ENCODE measurements at regions of chr1 and their contacts with region 1.

Region 1: GRCh38 chr1:203486618-203487370 is 7.2 kb upstream of the OPTC start:
- DNase-seq: no peak
- ATAC-seq: no peak
- H3K4me3 ChIP-seq: no peak overlapping the region
- H3K27ac ChIP-seq: peak overlapping the region in 1 of 2 donors; percentile 23
- H3K4me1 ChIP-seq: no peaks in the 10 kb centered on the region
- H3K27me3 ChIP-seq: no peaks in the 10 kb centered on the region

Region 2: GRCh38 chr1:203340112-203340804 is 146.5 kb before region 1 on chr1:
- intact Hi-C with region 1: loop called (anchors 1 to 2 kb)
- DNase-seq: peak in 1 of 2 donors; percentile 70
- ATAC-seq: peak; percentile 82
- H3K4me3 ChIP-seq: no peak overlapping the region
- H3K27ac ChIP-seq: no peak overlapping the region
- H3K4me1 ChIP-seq: no peaks in the 10 kb centered on the region
- H3K27me3 ChIP-seq: no peaks in the 10 kb centered on the region

Region 3: GRCh38 chr1:203390298-203390697 is 96.5 kb before region 1 on chr1:
- intact Hi-C with region 1: no loop called
- DNase-seq: no peak
- ATAC-seq: no peak
- H3K4me3 ChIP-seq: no peak overlapping the region
- H3K27ac ChIP-seq: no peak overlapping the region
- H3K4me1 ChIP-seq: no peaks in the 10 kb centered on the region
- H3K27me3 ChIP-seq: no peaks in the 10 kb centered on the region

Region 4: GRCh38 chr1:203448521-203449061 is 38.2 kb before region 1 on chr1:
- intact Hi-C with region 1: loop called in 1 of 2 experiments (anchors 5 kb)
- DNase-seq: no peak
- ATAC-seq: peak; percentile 64
- H3K4me3 ChIP-seq: no peak overlapping the region
- H3K27ac ChIP-seq: peak overlapping the region in 1 of 2 donors; percentile 47
- H3K4me1 ChIP-seq: no peaks in the 10 kb centered on the region
- H3K27me3 ChIP-seq: no peaks in the 10 kb centered on the region

Region 5: DNA sequence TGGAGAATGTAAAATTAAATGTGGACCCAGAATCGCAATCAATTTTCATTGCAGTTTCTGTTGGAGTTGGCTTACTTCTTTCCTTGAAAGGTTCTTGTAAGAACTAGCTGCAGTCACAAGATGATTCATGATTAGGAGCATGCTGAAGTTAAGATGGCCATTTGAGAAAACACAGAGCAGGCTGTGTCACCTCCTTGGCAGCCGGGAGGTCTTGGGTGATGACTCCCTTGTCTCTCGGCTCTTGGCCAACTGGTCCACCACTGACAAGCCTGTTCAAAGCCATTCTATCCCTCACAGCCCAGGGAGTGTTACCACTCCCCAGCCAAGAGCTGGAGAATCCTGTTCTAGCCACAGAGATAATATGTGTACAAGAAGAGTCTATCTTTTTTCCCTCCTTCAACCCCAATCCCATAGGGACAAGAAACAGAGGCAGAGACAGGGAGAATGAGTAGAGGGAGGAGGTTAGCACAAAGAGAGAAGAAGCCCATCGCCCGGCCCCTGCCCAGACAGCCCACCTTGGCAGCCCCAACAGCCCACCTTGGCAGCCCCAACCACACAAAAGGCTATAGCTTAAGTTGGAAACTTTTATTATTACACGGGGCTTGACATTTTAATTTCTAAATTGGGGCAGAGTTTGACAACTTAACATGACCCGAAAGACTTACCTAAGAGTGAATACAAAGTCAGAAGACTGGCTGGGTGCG is 47.9 kb after region 1 on chr1:
- intact Hi-C with region 1: no loop called
- DNase-seq: peak; percentile 87 to 90
- ATAC-seq: peak; percentile 34
- H3K4me3 ChIP-seq: no peak overlapping the region
- H3K27ac ChIP-seq: peak overlapping the region in 1 of 2 donors; percentile 51
- H3K4me1 ChIP-seq: peaks cover 0 to 9% of the 10 kb centered on the region in 2 donors
- H3K27me3 ChIP-seq: no peaks in the 10 kb centered on the region